Ascending aorta (tissue), 2 donors: ENCODE measurements at regions of chr4 and their contacts with region 1.

Region 1: GRCh38 chr4:158410272-158410671 is 111.4 kb upstream of the RXFP1 start:
- DNase-seq: no peak
- H3K4me3 ChIP-seq: no peak overlapping the region
- H3K27ac ChIP-seq: no peak overlapping the region
- H3K4me1 ChIP-seq: no peaks in the 10 kb centered on the region
- H3K27me3 ChIP-seq: no peaks in the 10 kb centered on the region
- CTCF ChIP-seq: no peak

Region 2: DNA sequence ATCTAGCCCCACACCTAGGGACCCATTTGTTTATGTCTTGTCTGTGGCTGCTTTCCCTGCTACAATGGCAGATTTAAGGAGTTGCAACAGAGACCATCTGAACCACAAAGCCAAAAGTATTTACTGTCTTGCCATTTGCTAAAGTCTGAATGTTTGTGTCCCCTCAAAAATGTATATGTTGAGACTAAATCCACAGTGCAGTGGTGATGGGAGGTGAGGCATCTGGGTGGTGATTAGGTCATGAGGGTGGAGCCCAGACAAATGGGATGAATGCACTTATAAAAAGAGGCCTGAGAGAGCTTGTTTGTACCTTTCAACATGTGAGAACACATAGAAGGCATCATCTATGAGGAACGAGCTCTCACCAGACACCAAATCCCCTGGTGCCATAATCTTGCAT is 62.7 kb before region 1 on chr4:
- intact Hi-C with region 1: no loop called
- DNase-seq: no peak
- H3K4me3 ChIP-seq: no peak overlapping the region
- H3K27ac ChIP-seq: no peak overlapping the region
- H3K4me1 ChIP-seq: no peaks in the 10 kb centered on the region
- H3K27me3 ChIP-seq: no peaks in the 10 kb centered on the region
- CTCF ChIP-seq: no peak

Region 3: DNA sequence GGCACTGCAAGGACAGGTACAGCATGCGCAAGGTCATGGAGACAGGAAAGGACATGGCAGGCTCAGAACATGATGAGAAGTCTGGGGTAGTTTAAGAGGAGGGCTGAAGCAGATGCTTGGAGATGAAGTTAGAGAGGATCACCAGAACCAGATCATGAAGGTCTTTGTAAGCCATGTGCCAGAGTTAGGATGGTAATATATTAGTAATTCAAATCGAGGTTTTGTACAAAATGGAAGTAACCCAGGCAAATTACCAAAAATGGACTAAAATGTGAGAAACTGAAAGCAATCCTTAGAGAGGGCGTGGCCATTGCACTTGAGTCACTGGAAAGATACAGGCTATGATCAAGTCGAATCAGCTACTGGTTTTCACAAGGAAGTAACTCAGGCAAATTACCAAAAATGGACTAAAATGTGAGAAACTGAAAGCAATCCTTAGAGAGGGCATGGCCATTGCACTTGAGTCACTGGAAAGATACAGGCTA is 124.9 kb after region 1 on chr4:
- intact Hi-C with region 1: no loop called
- DNase-seq: no peak
- H3K4me3 ChIP-seq: peak overlapping the region in 1 of 2 donors; percentile 11
- H3K27ac ChIP-seq: no peak overlapping the region
- H3K4me1 ChIP-seq: no peaks in the 10 kb centered on the region
- H3K27me3 ChIP-seq: no peaks in the 10 kb centered on the region
- CTCF ChIP-seq: no peak

Region 4: DNA sequence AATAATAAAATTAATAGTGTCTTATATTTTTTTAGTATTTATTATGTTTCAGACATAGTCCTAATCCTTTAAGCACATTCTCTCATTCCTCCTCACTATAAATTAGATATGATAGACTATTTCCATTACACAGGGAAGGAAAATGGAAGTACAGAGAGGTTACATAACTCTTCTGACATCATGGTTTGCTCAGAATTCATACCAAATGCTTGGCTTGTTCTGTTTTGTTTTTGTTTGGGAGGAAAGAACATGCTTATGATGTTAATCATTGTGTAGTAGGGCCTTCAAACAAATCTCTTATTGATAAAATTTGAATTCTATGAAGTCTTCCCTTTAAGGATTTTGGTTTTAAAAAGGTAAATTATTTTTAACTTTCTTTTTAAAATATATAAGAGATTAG is 170.9 kb after region 1 on chr4:
- intact Hi-C with region 1: loop called (anchors 10 kb)
- DNase-seq: no peak
- H3K4me3 ChIP-seq: no peak overlapping the region
- H3K27ac ChIP-seq: no peak overlapping the region
- H3K4me1 ChIP-seq: no peaks in the 10 kb centered on the region
- H3K27me3 ChIP-seq: no peaks in the 10 kb centered on the region
- CTCF ChIP-seq: no peak

Region 5: GRCh38 chr4:159308566-159309340 is 898.5 kb after region 1 on chr4:
- intact Hi-C with region 1: no loop called
- DNase-seq: no peak
- H3K4me3 ChIP-seq: no peak overlapping the region
- H3K27ac ChIP-seq: no peak overlapping the region
- H3K4me1 ChIP-seq: no peaks in the 10 kb centered on the region
- H3K27me3 ChIP-seq: no peaks in the 10 kb centered on the region
- CTCF ChIP-seq: no peak